ENCODE measurements at regions of chr17 and their contacts with region 1.

Region 1: GRCh38 chr17:82551779-82552457 is 32.4 kb downstream of the FOXK2 start:
- DNase-seq: peak; percentile 86
- H3K4me3 Mint-ChIP-seq: no peak overlapping the region
- H3K27ac Mint-ChIP-seq: peak overlapping the region; percentile 64
- H3K4me1 Mint-ChIP-seq: peaks cover 28% of the 10 kb centered on the region
- H3K27me3 Mint-ChIP-seq: no peaks in the 10 kb centered on the region
- CTCF ChIP-seq: peak; percentile 79

Region 2: DNA sequence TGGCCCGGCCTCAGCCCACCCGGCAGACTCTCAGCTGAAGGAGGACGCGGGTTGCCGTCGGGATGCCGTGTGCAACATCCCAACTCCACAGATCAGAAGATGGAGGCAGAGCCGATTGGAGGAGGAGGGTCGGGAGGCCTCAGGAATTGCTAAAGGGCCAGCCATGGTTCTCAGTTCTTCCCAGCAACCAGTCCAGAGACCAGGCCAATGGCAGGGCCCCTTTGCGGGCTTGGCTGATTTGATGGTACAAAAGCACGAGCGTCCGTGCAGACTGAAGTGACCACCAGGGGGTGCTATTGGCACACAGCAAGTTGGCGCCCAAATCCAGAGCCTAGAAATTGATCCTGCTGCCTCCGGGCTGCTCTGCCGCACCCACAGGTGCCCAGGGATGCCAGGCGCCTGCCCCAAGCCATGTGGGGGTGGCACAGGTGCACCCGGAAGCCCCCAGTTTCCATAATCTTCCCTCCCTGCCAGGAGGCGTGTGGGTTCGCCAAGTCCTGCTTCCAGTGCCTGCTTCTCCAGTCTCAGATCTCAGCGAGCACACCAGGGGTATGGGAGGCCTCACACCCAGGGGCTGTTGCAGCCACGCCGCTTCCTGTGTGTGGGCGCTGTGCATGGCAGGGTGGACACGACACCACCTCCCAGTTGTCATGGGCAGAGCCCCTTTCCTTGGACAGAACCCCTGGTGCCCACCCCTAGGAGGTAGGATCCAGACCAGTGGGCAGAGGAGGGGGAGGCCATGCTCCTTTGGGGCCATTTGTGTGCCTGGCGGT is 200.0 kb before region 1 on chr17:
- CTCF ChIA-PET with region 1: no interaction called
- intact Hi-C with region 1: loop called (anchors 5 kb)
- DNase-seq: peak; percentile 88
- H3K4me3 Mint-ChIP-seq: no peak overlapping the region
- H3K27ac Mint-ChIP-seq: no peak overlapping the region
- H3K4me1 Mint-ChIP-seq: no peaks in the 10 kb centered on the region
- H3K27me3 Mint-ChIP-seq: peaks cover 18% of the 10 kb centered on the region
- CTCF ChIP-seq: peak; percentile 94

Region 3: DNA sequence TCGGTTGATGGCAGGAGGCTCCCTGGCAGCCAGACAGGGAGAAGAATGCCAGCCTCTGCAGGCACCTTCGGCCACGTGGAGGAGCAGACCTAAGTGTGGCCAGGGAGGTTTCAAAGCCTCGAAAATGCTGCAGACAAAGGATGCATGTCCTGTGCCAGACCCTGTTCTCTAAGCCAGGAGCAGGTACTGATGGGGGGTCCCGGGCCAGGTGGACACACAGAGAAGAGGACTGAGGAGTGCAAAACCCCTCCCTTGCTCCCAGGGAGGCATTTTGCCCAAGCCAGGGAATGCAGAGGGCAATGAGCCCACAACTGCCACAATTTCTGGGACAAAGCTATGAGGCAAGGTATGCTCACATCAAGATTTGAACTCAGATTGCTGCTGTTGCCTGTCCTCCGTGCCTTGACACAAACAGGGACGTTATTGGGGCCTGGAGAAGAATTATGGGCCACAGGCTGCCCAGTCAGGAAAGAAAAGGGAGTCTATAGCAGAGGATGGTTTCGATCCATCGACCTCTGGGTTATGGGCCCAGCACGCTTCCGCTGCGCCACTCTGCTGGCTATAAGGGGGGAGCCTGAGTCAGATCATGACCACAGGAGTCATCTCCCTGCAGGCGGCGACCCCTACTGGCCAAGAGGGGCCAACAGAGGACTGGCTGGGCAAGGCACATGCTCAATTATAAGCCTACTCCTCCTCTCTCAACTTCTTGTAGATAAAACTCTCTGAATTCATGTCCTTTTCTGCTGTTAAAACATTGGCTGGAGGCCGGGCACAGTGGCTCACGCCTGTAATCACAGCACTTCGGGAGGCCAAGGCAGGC is 57.5 kb before region 1 on chr17:
- CTCF ChIA-PET with region 1: interaction called, 4 read pairs
- intact Hi-C with region 1: loop called (anchors 5 kb)
- DNase-seq: peak; percentile 86
- H3K4me3 Mint-ChIP-seq: peak overlapping the region; percentile 55
- H3K27ac Mint-ChIP-seq: peak overlapping the region; percentile 99
- H3K4me1 Mint-ChIP-seq: peaks cover 9% of the 10 kb centered on the region
- H3K27me3 Mint-ChIP-seq: no peaks in the 10 kb centered on the region
- CTCF ChIP-seq: peak; percentile 94

Measured in Calu3 (cell line).